Endothelial cell of umbilical vein (primary cell): ENCODE measurements at regions of chr11 and their contacts with region 1.

Region 1: GRCh38 chr11:65808744-65809341 is 22.0 kb downstream of the OVOL1 start:
- DNase-seq: no peak
- H3K4me3 ChIP-seq: no peak overlapping the region
- H3K27ac ChIP-seq: no peak overlapping the region
- H3K4me1 ChIP-seq: no peaks in the 10 kb centered on the region
- H3K27me3 ChIP-seq: peaks cover 12 to 15% of the 10 kb centered on the region in 2 experiments
- CTCF ChIP-seq: no peak
- POLR2A ChIP-seq: no peak

Region 2: DNA sequence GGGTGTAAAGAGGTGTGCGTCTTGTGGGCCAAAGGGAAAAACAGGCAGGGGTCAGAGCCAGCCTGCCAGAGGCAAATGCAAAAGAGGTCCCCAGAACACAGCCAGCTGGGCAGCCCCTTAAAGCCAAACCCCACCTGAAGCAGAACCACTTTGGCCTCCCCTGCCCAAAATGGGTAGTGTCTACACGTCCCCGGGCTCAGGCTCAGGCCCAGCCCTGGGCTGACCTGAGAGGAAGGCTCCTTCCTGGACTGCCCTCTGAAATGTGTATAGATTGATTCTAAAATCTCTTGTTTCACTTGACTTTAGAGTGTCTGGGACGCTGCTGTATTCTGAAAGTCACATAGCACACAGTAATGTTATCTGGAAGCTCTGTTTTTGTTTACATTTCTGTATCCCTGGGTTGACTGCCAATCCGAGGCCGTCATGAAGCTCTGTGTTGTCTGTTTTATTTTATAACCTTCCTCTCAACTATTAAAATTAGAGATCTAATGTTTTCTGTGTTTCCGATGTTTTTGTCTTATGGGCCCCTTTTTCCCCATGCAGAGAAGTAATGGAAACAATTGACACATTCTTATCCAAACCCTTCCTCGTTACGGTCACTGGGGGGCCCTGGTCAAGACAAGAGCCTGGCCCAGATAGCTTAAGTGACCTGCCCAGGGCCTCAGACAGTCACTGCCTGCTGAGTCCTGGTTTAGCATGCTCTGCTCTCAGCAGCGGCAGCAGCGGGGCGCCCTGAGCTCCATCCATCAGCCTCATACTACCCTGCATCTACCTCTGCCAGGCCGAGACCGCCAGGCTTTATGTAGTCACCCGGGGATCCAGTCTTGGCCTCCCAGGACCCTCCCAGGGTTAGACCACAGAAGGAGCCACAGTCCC is 11.9 kb before region 1 on chr11:
- CTCF ChIA-PET with region 1: interaction called, 11 read pairs
- POLR2A ChIA-PET with region 1: no interaction called
- dilution Hi-C with region 1: no loop called
- intact Hi-C with region 1: no loop called
- DNase-seq: no peak
- H3K4me3 ChIP-seq: no peak overlapping the region
- H3K27ac ChIP-seq: no peak overlapping the region
- H3K4me1 ChIP-seq: no peaks in the 10 kb centered on the region
- H3K27me3 ChIP-seq: peaks cover 0 to 8% of the 10 kb centered on the region in 2 experiments
- CTCF ChIP-seq: no peak
- POLR2A ChIP-seq: no peak